PC-3 (cell line): ENCODE measurements at regions of chr5 and their contacts with region 1.

Region 1: DNA sequence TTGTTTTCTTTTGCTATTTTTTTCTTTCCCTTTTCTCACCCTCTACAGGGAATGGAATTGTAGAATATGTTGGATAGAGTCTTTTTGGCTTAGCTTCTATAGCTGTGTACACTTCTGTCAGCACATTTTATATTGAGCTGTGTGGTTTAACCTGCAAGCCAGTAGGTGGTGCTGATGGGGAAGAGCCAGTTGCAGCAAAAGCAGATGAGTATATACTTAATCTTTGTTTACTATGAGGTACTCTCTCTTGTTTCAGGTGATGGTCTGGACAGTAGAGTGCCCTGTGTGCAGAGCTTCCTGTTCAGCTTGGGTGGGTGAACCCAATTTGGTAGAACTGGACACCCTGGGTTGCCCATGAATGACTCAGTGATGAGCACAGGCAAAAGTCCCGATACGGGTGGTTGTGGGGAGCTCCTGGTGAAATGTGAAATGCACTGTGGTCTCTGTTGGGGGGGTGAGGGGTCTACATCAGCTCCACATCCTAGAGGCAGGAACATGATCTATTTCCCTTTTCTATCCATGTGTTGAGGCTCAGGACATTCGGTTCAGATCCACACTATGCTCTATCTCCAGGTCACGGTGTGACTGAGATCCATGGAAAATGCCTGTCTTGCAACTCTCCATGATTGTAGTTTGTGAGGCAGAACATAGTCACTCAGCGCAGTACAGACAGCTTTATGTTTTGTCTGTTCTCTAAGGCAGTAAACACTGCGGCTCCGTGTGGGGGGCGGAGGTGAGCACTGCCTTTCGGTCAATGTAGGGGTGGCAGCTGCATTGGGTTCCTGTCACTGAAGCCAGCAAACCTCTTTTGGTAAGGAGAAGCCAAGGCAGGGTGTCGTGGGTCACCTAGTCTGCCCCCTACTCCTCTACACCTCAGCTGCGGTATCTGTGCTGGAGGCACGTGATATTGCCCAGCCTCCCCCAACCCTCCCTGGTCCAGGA is 353.2 kb downstream of the PRR16 start:
- DNase-seq: peak; percentile 41
- ATAC-seq: peak; percentile 84
- H3K4me3 ChIP-seq: no peak overlapping the region
- H3K27ac ChIP-seq: no peak overlapping the region
- H3K4me1 ChIP-seq: no peaks in the 10 kb centered on the region
- H3K27me3 ChIP-seq: no peaks in the 10 kb centered on the region
- CTCF ChIP-seq: peak; percentile 68

Region 2: GRCh38 chr5:121870489-121870888 is 1053.2 kb after region 1 on chr5:
- CTCF ChIA-PET with region 1: no interaction called
- POLR2A ChIA-PET with region 1: no interaction called
- intact Hi-C with region 1: loop called (anchors 1 kb)
- DNase-seq: peak; percentile 31
- ATAC-seq: no peak
- H3K4me3 ChIP-seq: no peak overlapping the region
- H3K27ac ChIP-seq: no peak overlapping the region
- H3K4me1 ChIP-seq: no peaks in the 10 kb centered on the region
- H3K27me3 ChIP-seq: 0 out of 2 replicates have a peak, but pooled peaks cover 5% of the 10 kb centered on the region
- CTCF ChIP-seq: peak; percentile 38